IMR-90 (cell line): ENCODE measurements at regions of chr11 and their contacts with region 1.

Region 1: DNA sequence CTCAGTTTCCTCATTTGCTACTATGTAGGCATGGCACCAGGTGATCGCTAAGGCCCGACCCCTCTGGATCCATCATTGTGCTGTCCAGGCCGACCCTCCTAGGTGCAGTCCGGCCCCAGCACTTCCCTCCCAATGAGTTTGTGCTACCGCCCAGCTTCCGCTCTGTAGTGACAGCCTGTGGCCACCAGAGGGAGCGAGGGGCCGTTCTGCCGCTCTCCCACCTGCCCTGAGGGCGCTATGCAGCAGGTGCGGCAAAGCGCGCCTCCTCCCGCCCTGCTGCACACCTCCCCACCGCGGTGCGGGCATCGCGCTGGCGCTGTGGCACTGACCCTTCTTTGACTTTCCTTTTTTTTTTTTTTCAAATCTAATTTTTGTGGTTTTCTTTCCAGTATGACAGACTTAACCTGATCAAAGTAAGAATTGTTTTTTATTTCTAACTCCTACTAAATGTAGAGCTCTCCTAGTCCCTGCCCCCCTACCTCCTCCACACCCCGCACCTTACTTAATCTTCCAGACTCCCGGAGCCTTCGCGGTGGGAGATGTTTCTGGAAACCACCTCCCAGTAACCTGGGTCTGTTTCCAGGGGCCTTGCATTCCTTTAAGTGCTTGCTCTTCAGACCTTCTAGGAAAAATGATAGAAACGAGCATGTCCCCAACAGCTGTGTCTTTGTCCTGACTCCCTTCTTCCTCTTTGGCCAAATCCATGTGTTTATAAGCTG is 73.7 kb downstream of the SCN3B start:
- DNase-seq: peak; percentile 19
- ATAC-seq: peak; percentile 92
- H3K4me3 ChIP-seq: no peak overlapping the region
- H3K27ac ChIP-seq: no peak overlapping the region
- H3K4me1 ChIP-seq: no peaks in the 10 kb centered on the region
- H3K27me3 ChIP-seq: no peaks in the 10 kb centered on the region
- CTCF ChIP-seq: peak; percentile 83
- POLR2A ChIP-seq: no peak
- RAD21 ChIP-seq: peak; percentile 76

Region 2: GRCh38 chr11:123301696-123302400 is 278.9 kb before region 1 on chr11:
- CTCF ChIA-PET with region 1: no interaction called
- POLR2A ChIA-PET with region 1: no interaction called
- dilution Hi-C with region 1: no loop called
- in situ Hi-C with region 1: no loop called
- intact Hi-C with region 1: loop called (anchors 10 kb)
- DNase-seq: peak; percentile 11
- ATAC-seq: peak; percentile 94
- H3K4me3 ChIP-seq: peak overlapping the region; percentile 32
- H3K27ac ChIP-seq: no peak overlapping the region
- H3K4me1 ChIP-seq: peaks cover 6% of the 10 kb centered on the region; the same call in 1 of the 2 replicates
- H3K27me3 ChIP-seq: peaks cover 21% of the 10 kb centered on the region; the same call in 1 of the 2 replicates
- CTCF ChIP-seq: peak; percentile 70
- POLR2A ChIP-seq: no peak
- RAD21 ChIP-seq: peak; percentile 63

Region 3: DNA sequence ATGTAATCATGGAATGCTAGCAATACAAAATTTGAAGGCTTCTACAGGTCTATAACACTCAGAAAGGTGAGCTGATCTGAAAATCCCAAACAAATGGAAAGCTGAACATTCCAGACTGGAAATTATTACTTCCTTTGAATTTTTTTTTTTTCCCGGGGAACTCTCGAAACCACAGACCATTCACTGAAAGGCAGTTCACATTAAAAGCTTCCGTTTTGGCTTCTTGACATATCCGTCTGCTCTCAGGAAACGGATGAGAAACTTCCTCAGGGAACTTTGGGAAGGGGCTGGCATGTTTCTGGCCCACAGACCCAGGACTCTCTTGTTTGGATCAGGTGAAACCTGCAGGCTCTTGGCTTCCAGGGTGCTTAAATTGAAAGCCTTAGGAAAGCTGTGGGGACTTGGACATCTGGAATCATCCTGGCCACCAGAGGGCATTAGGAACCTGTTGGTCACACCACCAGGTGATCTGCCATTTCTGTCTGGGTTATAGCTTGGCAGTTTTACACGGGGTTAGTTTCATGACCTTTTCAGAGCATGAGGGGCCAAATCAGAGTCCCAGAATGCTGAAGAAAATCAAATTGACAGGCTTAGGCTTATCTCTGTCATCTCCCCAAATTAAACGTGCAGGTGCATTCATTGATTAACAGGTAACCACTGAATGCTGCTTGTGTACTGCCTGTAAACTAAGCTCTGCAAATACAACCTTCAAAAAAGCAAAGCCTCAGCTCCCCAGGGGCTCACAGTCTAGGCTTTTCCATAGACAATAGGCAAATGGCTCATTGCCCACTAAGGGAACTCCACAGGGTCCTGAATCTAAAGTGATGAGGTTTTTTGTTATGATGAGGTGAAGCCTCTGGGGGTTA is 173.4 kb before region 1 on chr11:
- CTCF ChIA-PET with region 1: no interaction called
- POLR2A ChIA-PET with region 1: no interaction called
- dilution Hi-C with region 1: no loop called
- in situ Hi-C with region 1: no loop called
- intact Hi-C with region 1: loop called (anchors 1 kb)
- DNase-seq: peak; percentile 78
- ATAC-seq: peak; percentile 56
- H3K4me3 ChIP-seq: no peak overlapping the region
- H3K27ac ChIP-seq: no peak overlapping the region
- H3K4me1 ChIP-seq: no peaks in the 10 kb centered on the region
- H3K27me3 ChIP-seq: peaks cover 41% of the 10 kb centered on the region
- CTCF ChIP-seq: peak; percentile 76
- POLR2A ChIP-seq: no peak
- RAD21 ChIP-seq: peak; percentile 84

Region 4: GRCh38 chr11:123511037-123511870 is 69.5 kb before region 1 on chr11:
- CTCF ChIA-PET with region 1: interaction called, 3 read pairs
- POLR2A ChIA-PET with region 1: no interaction called
- dilution Hi-C with region 1: no loop called
- in situ Hi-C with region 1: no loop called
- intact Hi-C with region 1: loop called (anchors 1 kb)
- DNase-seq: peak; percentile 88
- ATAC-seq: peak; percentile 98
- H3K4me3 ChIP-seq: no peak overlapping the region
- H3K27ac ChIP-seq: no peak overlapping the region
- H3K4me1 ChIP-seq: peaks cover 6% of the 10 kb centered on the region; the same call in 1 of the 2 replicates
- H3K27me3 ChIP-seq: no peaks in the 10 kb centered on the region
- CTCF ChIP-seq: peak; percentile 96
- POLR2A ChIP-seq: no peak; the same call in 1 of the 2 replicates
- RAD21 ChIP-seq: peak; percentile 85

Region 5: GRCh38 chr11:123560006-123560405 is 20.7 kb before region 1 on chr11:
- CTCF ChIA-PET with region 1: interaction called, 10 read pairs
- POLR2A ChIA-PET with region 1: no interaction called
- dilution Hi-C with region 1: no loop called
- in situ Hi-C with region 1: no loop called
- intact Hi-C with region 1: no loop called
- DNase-seq: peak; percentile 88
- ATAC-seq: peak; percentile 88
- H3K4me3 ChIP-seq: peak overlapping the region; percentile 31
- H3K27ac ChIP-seq: peak overlapping the region; percentile 50
- H3K4me1 ChIP-seq: peaks cover 13% of the 10 kb centered on the region
- H3K27me3 ChIP-seq: no peaks in the 10 kb centered on the region
- CTCF ChIP-seq: no peak
- POLR2A ChIP-seq: no peak
- RAD21 ChIP-seq: no peak

Region 6: GRCh38 chr11:123707606-123708205 is 127.0 kb after region 1 on chr11:
- CTCF ChIA-PET with region 1: interaction called, 29 read pairs
- POLR2A ChIA-PET with region 1: no interaction called
- dilution Hi-C with region 1: no loop called
- in situ Hi-C with region 1: loop called (anchors 5 kb)
- intact Hi-C with region 1: loop called (anchors 1 kb)
- DNase-seq: peak; percentile 77
- ATAC-seq: peak; percentile 84
- H3K4me3 ChIP-seq: no peak overlapping the region
- H3K27ac ChIP-seq: no peak overlapping the region
- H3K4me1 ChIP-seq: no peaks in the 10 kb centered on the region
- H3K27me3 ChIP-seq: peaks cover 18% of the 10 kb centered on the region
- CTCF ChIP-seq: peak; percentile 83
- POLR2A ChIP-seq: no peak
- RAD21 ChIP-seq: peak; percentile 83